Activated B cell treated with CpG ODN at 0.5 μM for 24 hours (primary cell): ENCODE measurements at regions of chr16 and their contacts with region 1.

Region 1: DNA sequence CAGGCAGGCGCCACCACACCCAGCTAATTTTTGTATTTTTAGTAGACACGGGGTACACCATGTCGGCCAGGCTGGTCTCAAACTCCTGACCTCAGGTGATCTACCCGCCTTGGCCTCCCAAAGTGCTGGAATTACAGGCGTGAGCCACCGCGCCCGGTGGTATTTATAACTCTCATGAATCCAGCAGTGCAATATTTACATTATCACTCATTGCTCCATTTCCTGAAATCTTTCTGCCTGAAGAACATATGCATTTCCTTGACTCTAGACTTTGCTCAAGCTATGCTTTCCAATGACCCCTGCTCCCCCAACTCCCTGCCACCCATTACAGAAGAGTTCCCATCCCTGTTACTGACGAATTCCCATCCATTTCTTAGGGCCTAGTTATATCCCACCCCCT is 19.7 kb upstream of the NDUFAB1 start:
- DNase-seq: no peak
- ATAC-seq: no peak
- H3K4me3 Mint-ChIP-seq: no peak overlapping the region
- H3K27ac Mint-ChIP-seq: no peak overlapping the region
- H3K4me1 Mint-ChIP-seq: no peaks in the 10 kb centered on the region
- H3K27me3 Mint-ChIP-seq: no peaks in the 10 kb centered on the region
- CTCF ChIP-seq: no peak

Region 2: GRCh38 chr16:23452572-23453337 is 163.1 kb before region 1 on chr16 and contains the start of gene COG7:
- CTCF ChIA-PET with region 1: no interaction called
- POLR2A ChIA-PET with region 1: no interaction called
- intact Hi-C with region 1: no loop called
- DNase-seq: peak; percentile 86
- ATAC-seq: peak; percentile 88
- H3K4me3 Mint-ChIP-seq: peak within 1 kb of the TSS; percentile 93
- H3K27ac Mint-ChIP-seq: peak within 1 kb of the TSS; percentile 83
- H3K4me1 Mint-ChIP-seq: peaks cover 20% of the 10 kb centered on the region
- H3K27me3 Mint-ChIP-seq: no peaks in the 10 kb centered on the region
- CTCF ChIP-seq: no peak
- total RNA-seq, gene COG7: 19.3 and 20.2 TPM in 2 replicates

Region 3: DNA sequence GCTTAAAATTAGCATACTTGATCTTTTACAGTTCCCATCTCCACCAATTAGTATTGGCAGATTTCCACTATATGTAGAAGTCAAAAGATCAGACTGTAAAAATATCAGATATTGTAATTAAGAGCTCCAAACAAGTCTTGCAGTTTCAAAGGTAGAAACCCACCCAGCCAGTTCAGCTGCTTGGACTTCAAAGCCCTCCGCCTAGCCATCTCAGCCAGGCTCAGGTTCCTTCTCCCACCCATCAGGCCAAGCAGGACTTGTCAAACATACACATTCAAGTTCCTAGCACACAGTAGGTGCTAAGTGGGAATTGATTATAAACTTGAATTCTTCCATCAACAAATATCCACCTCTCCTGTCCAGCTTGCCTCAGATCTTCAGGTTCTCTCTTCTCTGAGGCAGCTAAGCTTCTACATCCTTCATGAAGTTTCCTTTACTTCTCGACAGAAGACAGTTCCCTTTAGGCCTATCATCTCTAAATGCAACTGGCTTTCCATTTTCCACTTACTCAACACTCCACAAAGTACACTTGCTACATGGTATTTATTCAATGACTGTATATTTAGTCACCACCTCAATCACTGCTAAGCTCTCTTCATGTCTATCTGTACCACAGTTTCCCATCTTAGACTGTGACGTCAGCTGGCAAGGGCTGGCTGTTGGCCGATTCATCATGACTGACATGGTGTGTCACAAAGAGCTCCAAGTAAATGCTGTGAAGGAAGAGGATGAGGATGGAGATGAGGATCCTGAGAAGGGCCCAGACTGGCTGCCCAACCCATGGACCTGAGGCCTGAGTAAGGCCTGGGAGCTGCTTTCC is 149.5 kb before region 1 on chr16:
- CTCF ChIA-PET with region 1: no interaction called
- POLR2A ChIA-PET with region 1: no interaction called
- intact Hi-C with region 1: no loop called
- DNase-seq: no peak
- ATAC-seq: no peak
- H3K4me3 Mint-ChIP-seq: no peak overlapping the region
- H3K27ac Mint-ChIP-seq: peak overlapping the region; percentile 27
- H3K4me1 Mint-ChIP-seq: no peaks in the 10 kb centered on the region
- H3K27me3 Mint-ChIP-seq: no peaks in the 10 kb centered on the region
- CTCF ChIP-seq: no peak

Region 4: GRCh38 chr16:23635958-23636357 is 20.2 kb after region 1 on chr16:
- CTCF ChIA-PET with region 1: no interaction called
- POLR2A ChIA-PET with region 1: no interaction called
- intact Hi-C with region 1: no loop called
- DNase-seq: no peak
- ATAC-seq: no peak
- H3K4me3 Mint-ChIP-seq: no peak overlapping the region
- H3K27ac Mint-ChIP-seq: no peak overlapping the region
- H3K4me1 Mint-ChIP-seq: peaks cover 10% of the 10 kb centered on the region
- H3K27me3 Mint-ChIP-seq: no peaks in the 10 kb centered on the region
- CTCF ChIP-seq: no peak

Region 5: GRCh38 chr16:23650674-23651416 is 35.0 kb after region 1 on chr16:
- CTCF ChIA-PET with region 1: no interaction called
- POLR2A ChIA-PET with region 1: no interaction called
- intact Hi-C with region 1: loop called (anchors 1 kb)
- DNase-seq: no peak
- ATAC-seq: no peak
- H3K4me3 Mint-ChIP-seq: no peak overlapping the region
- H3K27ac Mint-ChIP-seq: peak overlapping the region; percentile 51
- H3K4me1 Mint-ChIP-seq: peaks cover 34% of the 10 kb centered on the region
- H3K27me3 Mint-ChIP-seq: no peaks in the 10 kb centered on the region
- CTCF ChIP-seq: no peak

Region 6: DNA sequence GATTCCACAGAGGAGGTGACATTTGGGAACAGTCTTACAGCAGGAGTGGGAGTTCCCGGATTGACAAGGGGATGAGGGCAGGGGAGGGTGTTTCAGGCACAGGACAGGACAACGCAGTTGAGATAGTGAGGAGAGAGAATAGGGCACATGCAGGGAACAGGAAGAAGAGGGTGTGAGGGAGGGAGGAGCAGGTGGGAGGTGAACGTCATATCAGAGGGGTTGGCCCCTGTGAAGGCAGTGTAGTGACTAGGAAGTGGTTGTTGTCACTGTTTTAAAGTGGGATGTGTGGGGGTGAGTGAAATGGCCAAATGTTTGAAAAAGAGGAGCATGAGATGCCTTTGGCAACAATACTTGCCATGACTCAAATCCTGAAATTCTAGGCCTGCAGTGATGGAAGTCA is 232.1 kb after region 1 on chr16:
- CTCF ChIA-PET with region 1: no interaction called
- POLR2A ChIA-PET with region 1: no interaction called
- intact Hi-C with region 1: no loop called
- DNase-seq: no peak
- ATAC-seq: peak; percentile 76
- H3K4me3 Mint-ChIP-seq: peak overlapping the region; percentile 29
- H3K27ac Mint-ChIP-seq: peak overlapping the region; percentile 82
- H3K4me1 Mint-ChIP-seq: peaks cover 91% of the 10 kb centered on the region
- H3K27me3 Mint-ChIP-seq: no peaks in the 10 kb centered on the region
- CTCF ChIP-seq: no peak